Heart right ventricle (tissue), 16 donors: ENCODE measurements at regions of chr1 and their contacts with region 1.

Region 1: GRCh38 chr1:6602669-6603237 is at the start of gene KLHL21:
- DNase-seq: peak; percentile 91 to 92
- ATAC-seq: peak; percentile 68 to 89 (median 84)
- H3K4me3 ChIP-seq: peak within 1 kb of the TSS; percentile 68 to 96 (median 86)
- H3K27ac ChIP-seq: peak within 1 kb of the TSS; percentile 96 to 100 (median 99)
- H3K4me1 ChIP-seq: peaks cover 18 to 68% (median 53%) of the 10 kb centered on the region in 9 donors
- H3K27me3 ChIP-seq: no peaks in the 10 kb centered on the region
- CTCF ChIP-seq: no peak
- total RNA-seq, gene KLHL21: 49.5 to 93.3 (median 70.4) TPM

Region 2: GRCh38 chr1:6222636-6223035 is 380.1 kb before region 1 on chr1:
- intact Hi-C with region 1: no loop called
- DNase-seq: peak; percentile 62 to 91
- ATAC-seq: peak; percentile 65 to 89 (median 84)
- H3K4me3 ChIP-seq: no peak overlapping the region
- H3K27ac ChIP-seq: peak overlapping the region; percentile 21 to 85 (median 72)
- H3K4me1 ChIP-seq: peaks cover 16 to 61% (median 36%) of the 10 kb centered on the region in 9 donors
- H3K27me3 ChIP-seq: no peaks in the 10 kb centered on the region
- CTCF ChIP-seq: no peak

Region 3: DNA sequence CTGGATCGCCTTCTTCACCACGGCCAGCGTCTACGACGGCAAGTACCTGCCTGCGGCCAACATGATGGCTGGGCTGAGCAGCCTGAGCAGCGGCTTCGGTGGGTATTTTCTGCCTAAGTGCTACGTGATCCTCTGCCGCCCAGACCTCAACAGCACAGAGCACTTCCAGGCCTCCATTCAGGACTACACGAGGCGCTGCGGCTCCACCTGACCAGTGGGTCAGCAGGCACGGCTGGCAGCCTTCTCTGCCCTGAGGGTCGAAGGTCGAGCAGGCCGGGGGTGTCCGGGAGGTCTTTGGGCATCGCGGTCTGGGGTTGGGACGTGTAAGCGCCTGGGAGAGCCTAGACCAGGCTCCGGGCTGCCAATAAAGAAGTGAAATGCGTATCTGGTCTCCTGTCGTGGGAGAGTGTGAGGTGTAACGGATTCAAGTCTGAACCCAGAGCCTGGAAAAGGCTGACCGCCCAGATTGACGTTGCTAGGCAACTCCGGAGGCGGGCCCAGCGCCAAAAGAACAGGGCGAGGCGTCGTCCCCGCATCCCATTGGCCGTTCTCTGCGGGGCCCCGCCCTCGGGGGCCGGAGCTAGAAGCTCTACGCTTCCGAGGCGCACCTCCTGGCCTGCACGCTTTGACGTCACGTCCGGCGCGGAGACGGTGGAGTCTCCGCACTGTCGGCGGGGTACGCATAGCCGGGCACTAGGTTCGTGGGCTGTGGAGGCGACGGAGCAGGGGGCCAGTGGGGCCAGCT is 23.2 kb before region 1 on chr1 and contains the start of gene ZBTB48:
- intact Hi-C with region 1: loop called in 1 of 10 experiments (anchors 2 kb)
- DNase-seq: peak; percentile 99 to 100
- ATAC-seq: peak; percentile 95 to 99 (median 98)
- H3K4me3 ChIP-seq: peak within 1 kb of the TSS; percentile 78 to 98 (median 89)
- H3K27ac ChIP-seq: peak within 1 kb of the TSS; percentile 68 to 97 (median 94)
- H3K4me1 ChIP-seq: peaks cover 18 to 50% (median 40%) of the 10 kb centered on the region in 9 donors
- H3K27me3 ChIP-seq: no peaks in the 10 kb centered on the region
- CTCF ChIP-seq: no peak
- total RNA-seq, gene ZBTB48: 7.3 to 16.6 (median 11.0) TPM

Region 4: GRCh38 chr1:6613361-6614018 is 10.7 kb after region 1 on chr1 and contains the start of gene PHF13:
- intact Hi-C with region 1: loop called in 2 of 10 experiments (anchors 1 kb)
- DNase-seq: peak; percentile 99 to 100
- ATAC-seq: peak; percentile 97 to 99 (median 98)
- H3K4me3 ChIP-seq: peak within 1 kb of the TSS; percentile 68 to 100 (median 98)
- H3K27ac ChIP-seq: peak within 1 kb of the TSS; percentile 93 to 99 (median 96)
- H3K4me1 ChIP-seq: peaks cover 2 to 57% (median 24%) of the 10 kb centered on the region in 9 donors
- H3K27me3 ChIP-seq: peaks cover 0 to 7% (median 0%) of the 10 kb centered on the region in 7 donors
- CTCF ChIP-seq: no peak
- total RNA-seq, gene PHF13: 5.9 to 12.2 (median 8.0) TPM